ENCODE measurements at regions of chr7 and their contacts with region 1.

Region 1: GRCh38 chr7:140369294-140369693 is 29.0 kb downstream of the SLC37A3 start:
- DNase-seq: no peak

Region 2: GRCh38 chr7:140284062-140284461 is 85.2 kb before region 1 on chr7:
- intact Hi-C with region 1: no loop called
- DNase-seq: no peak

Region 3: GRCh38 chr7:140383954-140384713 is 14.8 kb after region 1 on chr7:
- intact Hi-C with region 1: loop called in 1 of 2 experiments (anchors 2 kb)
- DNase-seq: no peak

Measured in posterior vena cava (tissue), 2 donors.